ENCODE measurements at regions of chr3 and their contacts with region 1.

Region 1: GRCh38 chr3:112043603-112044201 is 9.2 kb downstream of the TMPRSS7 start:
- DNase-seq: peak; percentile 14
- H3K4me3 ChIP-seq: no peak overlapping the region
- H3K27ac ChIP-seq: no peak overlapping the region
- H3K4me1 ChIP-seq: no peaks in the 10 kb centered on the region
- H3K27me3 ChIP-seq: no peaks in the 10 kb centered on the region
- CTCF ChIP-seq: peak; percentile 56 to 73 (median 66)
- POLR2A ChIP-seq: no peak

Region 2: DNA sequence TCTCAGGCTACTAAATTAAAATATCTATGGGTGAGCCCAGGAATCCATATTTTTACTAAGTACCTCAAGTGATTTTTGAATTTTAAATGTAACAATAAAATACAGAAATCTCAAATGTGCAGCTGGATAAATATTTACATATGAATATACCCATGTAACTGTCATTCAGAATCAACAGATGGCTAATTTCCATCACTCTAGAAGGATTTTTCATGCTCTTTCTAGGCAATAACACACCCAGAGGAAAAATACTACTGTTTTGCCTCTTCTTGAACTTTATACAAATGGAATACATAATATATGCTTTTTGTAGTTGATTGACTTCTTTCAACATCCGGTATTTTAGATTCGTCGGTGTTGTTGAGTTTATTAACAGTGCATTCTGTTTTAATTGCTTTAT is 1573.4 kb before region 1 on chr3:
- intact Hi-C with region 1: no loop called
- DNase-seq: no peak
- H3K4me3 ChIP-seq: no peak overlapping the region
- H3K27ac ChIP-seq: no peak overlapping the region
- H3K4me1 ChIP-seq: no peaks in the 10 kb centered on the region
- H3K27me3 ChIP-seq: no peaks in the 10 kb centered on the region
- CTCF ChIP-seq: no peak
- POLR2A ChIP-seq: no peak

Region 3: GRCh38 chr3:111668912-111669488 is 374.7 kb before region 1 on chr3:
- intact Hi-C with region 1: loop called (anchors 5 kb)
- DNase-seq: no peak
- H3K4me3 ChIP-seq: no peak overlapping the region
- H3K27ac ChIP-seq: no peak overlapping the region
- H3K4me1 ChIP-seq: no peaks in the 10 kb centered on the region
- H3K27me3 ChIP-seq: no peaks in the 10 kb centered on the region
- CTCF ChIP-seq: peak; percentile 44 to 81 (median 71)
- POLR2A ChIP-seq: no peak